ENCODE measurements at regions of chr2 and their contacts with region 1.

Region 1: GRCh38 chr2:48471048-48471474 is 58.9 kb upstream of the STON1 start:
- DNase-seq: no peak
- H3K4me3 ChIP-seq: no peak overlapping the region
- H3K27ac ChIP-seq: no peak overlapping the region
- H3K27me3 ChIP-seq: no peaks in the 10 kb centered on the region
- CTCF ChIP-seq: peak; percentile 62

Region 2: GRCh38 chr2:48107326-48107925 is 363.6 kb before region 1 on chr2:
- CTCF ChIA-PET with region 1: interaction called, 12 read pairs
- POLR2A ChIA-PET with region 1: no interaction called
- DNase-seq: no peak
- H3K4me3 ChIP-seq: no peak overlapping the region
- H3K27ac ChIP-seq: peak overlapping the region; percentile 91
- H3K27me3 ChIP-seq: no peaks in the 10 kb centered on the region
- CTCF ChIP-seq: peak; percentile 42

Region 3: GRCh38 chr2:48448274-48449061 is 22.6 kb before region 1 on chr2:
- CTCF ChIA-PET with region 1: interaction called, 35 read pairs
- POLR2A ChIA-PET with region 1: no interaction called
- DNase-seq: peak; percentile 23
- H3K4me3 ChIP-seq: no peak overlapping the region
- H3K27ac ChIP-seq: no peak overlapping the region
- H3K27me3 ChIP-seq: no peaks in the 10 kb centered on the region
- CTCF ChIP-seq: no peak

Region 4: DNA sequence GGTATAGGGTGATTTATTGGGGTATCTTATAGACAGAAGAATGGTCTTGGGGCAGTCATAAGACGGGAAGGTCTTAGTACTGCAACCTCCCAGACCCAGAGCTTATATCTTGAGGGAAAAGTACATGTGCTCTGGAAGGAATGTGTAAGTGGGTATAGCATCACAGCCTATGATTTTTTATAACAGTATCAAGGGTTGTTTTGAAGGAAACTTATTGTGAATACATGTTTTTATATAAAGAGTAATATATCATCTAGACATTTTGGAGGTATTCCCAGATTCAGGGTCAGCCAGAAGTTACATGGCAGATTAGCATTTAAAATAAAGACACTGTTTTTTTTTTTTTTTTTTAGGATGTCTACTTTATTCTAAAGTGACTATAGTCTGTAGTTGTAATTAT is 11.3 kb after region 1 on chr2:
- CTCF ChIA-PET with region 1: interaction called, 30 read pairs
- POLR2A ChIA-PET with region 1: no interaction called
- DNase-seq: peak; percentile 47
- H3K4me3 ChIP-seq: no peak overlapping the region
- H3K27ac ChIP-seq: no peak overlapping the region
- H3K27me3 ChIP-seq: no peaks in the 10 kb centered on the region
- CTCF ChIP-seq: no peak

Region 5: DNA sequence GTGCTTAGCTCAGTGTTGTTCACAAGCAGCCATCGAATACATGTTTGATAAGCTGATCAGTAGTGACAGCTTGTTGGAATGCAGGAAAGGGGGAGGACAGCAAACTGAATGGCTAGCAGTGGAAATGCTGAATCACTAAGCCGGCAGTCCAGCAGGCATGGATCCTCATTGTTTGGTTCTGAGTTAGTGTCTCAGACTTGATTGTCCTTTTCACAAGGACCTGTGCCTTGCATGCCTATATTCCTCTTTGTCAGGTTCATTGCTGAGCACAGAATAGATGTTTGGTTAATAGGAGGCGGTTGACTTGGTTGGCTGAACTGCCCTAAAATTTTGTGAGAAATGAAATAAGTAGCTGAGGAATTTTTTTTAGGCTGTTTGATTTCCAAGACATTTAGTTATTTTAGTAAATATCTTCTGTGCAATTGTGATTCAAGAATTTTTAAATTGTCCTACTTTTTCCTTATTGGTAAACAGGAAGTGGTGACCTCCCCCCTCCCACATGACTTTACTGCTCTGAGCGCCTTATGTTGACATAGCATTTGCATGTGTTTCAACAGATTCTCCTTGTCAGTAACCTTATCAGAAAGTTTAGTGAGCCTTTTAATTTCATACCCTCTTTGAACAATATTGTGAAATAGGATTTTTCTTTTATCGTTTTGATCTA is 37.5 kb after region 1 on chr2:
- CTCF ChIA-PET with region 1: interaction called, 14 read pairs
- POLR2A ChIA-PET with region 1: no interaction called
- DNase-seq: no peak
- H3K4me3 ChIP-seq: no peak overlapping the region
- H3K27ac ChIP-seq: peak overlapping the region; percentile 57
- H3K27me3 ChIP-seq: no peaks in the 10 kb centered on the region
- CTCF ChIP-seq: no peak

Region 6: DNA sequence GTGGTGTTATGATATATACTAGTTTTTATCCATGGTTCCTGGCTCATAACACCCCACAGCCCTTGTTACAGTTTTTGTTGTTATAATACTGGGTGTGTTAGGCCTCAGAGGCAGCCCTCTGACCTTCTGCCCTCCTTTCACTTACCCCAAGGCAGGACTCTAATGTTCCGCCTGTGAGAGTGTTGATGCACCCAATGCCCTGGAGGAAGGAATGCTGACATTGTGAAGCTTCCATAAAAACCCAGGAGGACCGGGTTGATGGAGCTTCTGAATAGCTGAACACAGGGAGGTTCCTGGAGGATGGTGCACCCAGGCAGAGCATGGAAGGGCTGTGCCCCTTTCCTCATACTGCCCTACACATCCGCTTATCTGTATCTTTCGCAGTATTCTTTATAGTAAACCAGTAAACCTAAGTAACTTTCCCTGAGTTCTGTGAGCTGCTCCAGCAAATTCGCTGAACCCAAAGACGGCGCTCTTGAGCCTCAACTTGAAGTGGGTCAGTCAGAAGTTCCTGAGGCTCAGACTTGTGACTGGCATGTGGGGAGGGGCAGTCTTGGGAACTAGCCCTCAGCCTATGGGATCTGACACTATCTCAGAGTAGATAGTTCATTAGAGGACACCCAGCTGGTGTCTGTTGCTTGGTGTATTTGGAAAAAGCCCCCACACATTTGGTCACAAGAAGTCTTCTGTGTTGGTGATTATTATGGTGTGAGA is 69.3 kb after region 1 on chr2:
- CTCF ChIA-PET with region 1: interaction called, 10 read pairs
- POLR2A ChIA-PET with region 1: interaction called, 6 read pairs
- DNase-seq: no peak
- H3K4me3 ChIP-seq: no peak overlapping the region
- H3K27ac ChIP-seq: no peak overlapping the region
- H3K27me3 ChIP-seq: no peaks in the 10 kb centered on the region
- CTCF ChIP-seq: no peak

Region 7: GRCh38 chr2:48638261-48638660 is 167.2 kb after region 1 on chr2:
- CTCF ChIA-PET with region 1: no interaction called
- POLR2A ChIA-PET with region 1: no interaction called
- DNase-seq: no peak
- H3K4me3 ChIP-seq: no peak overlapping the region
- H3K27ac ChIP-seq: no peak overlapping the region
- H3K27me3 ChIP-seq: no peaks in the 10 kb centered on the region
- CTCF ChIP-seq: no peak

Region 8: DNA sequence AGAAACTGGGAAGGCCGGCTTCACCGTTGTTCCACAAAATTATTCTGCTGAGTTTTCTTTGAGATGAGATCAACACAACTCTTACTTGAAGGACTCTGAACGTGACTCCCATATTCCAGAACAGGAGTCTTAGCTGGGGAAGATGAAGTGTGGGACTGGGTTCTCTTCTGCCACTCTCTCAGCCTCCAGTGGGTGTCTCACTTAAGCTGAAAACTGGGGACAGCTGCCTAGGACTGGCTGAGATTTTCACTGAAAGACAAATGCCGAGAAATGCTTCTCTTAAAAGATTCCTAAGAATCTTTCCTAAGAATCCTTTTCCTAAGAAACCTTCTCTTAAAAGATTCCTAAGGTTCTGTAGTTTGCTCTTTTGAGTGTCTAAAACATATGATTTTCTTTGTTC is 441.0 kb after region 1 on chr2:
- CTCF ChIA-PET with region 1: no interaction called
- POLR2A ChIA-PET with region 1: no interaction called
- DNase-seq: no peak
- H3K4me3 ChIP-seq: no peak overlapping the region
- H3K27ac ChIP-seq: no peak overlapping the region
- H3K27me3 ChIP-seq: peaks cover 3% of the 10 kb centered on the region
- CTCF ChIP-seq: no peak

Region 9: GRCh38 chr2:49359721-49360405 is 888.8 kb after region 1 on chr2:
- CTCF ChIA-PET with region 1: no interaction called
- POLR2A ChIA-PET with region 1: no interaction called
- DNase-seq: no peak
- H3K4me3 ChIP-seq: no peak overlapping the region
- H3K27ac ChIP-seq: no peak overlapping the region
- H3K27me3 ChIP-seq: no peaks in the 10 kb centered on the region
- CTCF ChIP-seq: no peak